Activated CD4-positive, alpha-beta memory T cell treated with anti-CD3 and anti-CD28 coated beads, Interleukin-2, amount 10 ng/mL, durations not matched to agents 7 days and 5 days (primary cell): ENCODE measurements at regions of chr19 and their contacts with region 1.

Region 1: GRCh38 chr19:16542045-16542909 is at the start of gene CHERP:
- DNase-seq: peak; percentile 95
- H3K4me3 Mint-ChIP-seq: peak within 1 kb of the TSS; percentile 88
- H3K27ac Mint-ChIP-seq: peak within 1 kb of the TSS; percentile 89
- H3K4me1 Mint-ChIP-seq: peaks cover 57% of the 10 kb centered on the region
- H3K27me3 Mint-ChIP-seq: no peaks in the 10 kb centered on the region
- total RNA-seq, gene CHERP: 50.8 to 53.6 TPM

Region 2: GRCh38 chr19:16476401-16476800 is 65.9 kb before region 1 on chr19:
- CTCF ChIA-PET with region 1: no interaction called
- POLR2A ChIA-PET with region 1: no interaction called
- DNase-seq: no peak
- H3K4me3 Mint-ChIP-seq: no peak overlapping the region
- H3K27ac Mint-ChIP-seq: no peak overlapping the region
- H3K4me1 Mint-ChIP-seq: no peaks in the 10 kb centered on the region
- H3K27me3 Mint-ChIP-seq: peaks cover 9% of the 10 kb centered on the region

Region 3: GRCh38 chr19:16566161-16566560 is 23.9 kb after region 1 on chr19:
- CTCF ChIA-PET with region 1: interaction called, 3 read pairs
- POLR2A ChIA-PET with region 1: interaction called, 19 read pairs
- DNase-seq: peak; percentile 91
- H3K4me3 Mint-ChIP-seq: peak overlapping the region; percentile 62
- H3K27ac Mint-ChIP-seq: peak overlapping the region; percentile 100
- H3K4me1 Mint-ChIP-seq: peaks cover 61% of the 10 kb centered on the region
- H3K27me3 Mint-ChIP-seq: no peaks in the 10 kb centered on the region

Region 4: GRCh38 chr19:16572332-16573211 is 30.3 kb after region 1 on chr19 and contains the start of gene SLC35E1:
- CTCF ChIA-PET with region 1: interaction called, 3 read pairs
- POLR2A ChIA-PET with region 1: interaction called, 19 read pairs
- DNase-seq: peak; percentile 93
- H3K4me3 Mint-ChIP-seq: peak within 1 kb of the TSS; percentile 93
- H3K27ac Mint-ChIP-seq: peak within 1 kb of the TSS; percentile 90
- H3K4me1 Mint-ChIP-seq: peaks cover 68% of the 10 kb centered on the region
- H3K27me3 Mint-ChIP-seq: no peaks in the 10 kb centered on the region
- total RNA-seq, gene SLC35E1: 57.3 to 57.7 TPM

Region 5: DNA sequence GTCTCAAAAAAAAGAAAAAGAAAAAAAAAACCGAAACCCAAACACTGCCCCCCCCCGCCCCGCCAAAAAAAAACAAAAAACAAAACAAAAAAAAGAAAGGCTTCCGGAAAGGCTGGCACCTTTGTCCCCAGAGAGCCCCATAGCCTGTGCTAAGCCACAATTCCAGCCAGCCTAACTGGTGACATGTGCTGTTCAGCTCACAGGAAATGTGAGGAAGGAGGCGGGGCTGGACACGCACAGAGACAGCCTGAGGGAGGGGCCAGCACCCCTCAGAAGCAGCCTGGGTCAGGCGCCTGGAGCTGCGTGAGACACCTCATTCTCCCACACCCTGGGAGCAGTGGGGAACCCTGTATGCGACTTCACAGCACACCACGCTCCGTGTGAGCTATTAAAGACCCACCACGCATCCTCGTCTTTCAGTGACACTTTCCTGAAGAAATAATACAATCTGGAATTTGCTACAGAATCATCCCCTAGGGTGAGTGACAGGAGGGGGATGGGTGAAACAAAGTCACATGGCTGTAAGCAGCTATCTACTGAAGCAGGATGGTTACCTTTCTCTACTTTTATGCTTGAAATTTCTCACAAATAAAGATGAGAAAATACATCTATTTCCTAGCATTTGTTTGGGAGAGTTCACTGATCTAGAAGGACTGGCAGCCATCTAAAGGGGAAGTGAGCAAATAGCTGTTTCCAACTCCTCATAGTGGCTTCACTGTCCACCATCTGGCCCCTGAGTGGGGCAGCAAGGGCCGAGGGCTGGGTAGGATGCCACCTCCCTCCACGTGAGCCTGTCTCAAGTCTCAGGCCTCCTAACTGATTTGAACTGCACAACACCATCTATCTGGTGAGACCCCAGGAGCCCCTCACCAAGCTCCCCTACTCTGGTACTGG is 42.2 kb after region 1 on chr19:
- CTCF ChIA-PET with region 1: interaction called, 3 read pairs
- POLR2A ChIA-PET with region 1: interaction called, 20 read pairs
- DNase-seq: peak; percentile 93
- H3K4me3 Mint-ChIP-seq: peak overlapping the region; percentile 77
- H3K27ac Mint-ChIP-seq: peak overlapping the region; percentile 90
- H3K4me1 Mint-ChIP-seq: peaks cover 83% of the 10 kb centered on the region
- H3K27me3 Mint-ChIP-seq: no peaks in the 10 kb centered on the region

Region 6: GRCh38 chr19:16920758-16921210 is 378.5 kb after region 1 on chr19:
- CTCF ChIA-PET with region 1: no interaction called
- POLR2A ChIA-PET with region 1: no interaction called
- DNase-seq: no peak
- H3K4me3 Mint-ChIP-seq: no peak overlapping the region
- H3K27ac Mint-ChIP-seq: no peak overlapping the region
- H3K4me1 Mint-ChIP-seq: no peaks in the 10 kb centered on the region
- H3K27me3 Mint-ChIP-seq: no peaks in the 10 kb centered on the region